ENCODE measurements at regions of chr20 and their contacts with region 1.

Region 1: DNA sequence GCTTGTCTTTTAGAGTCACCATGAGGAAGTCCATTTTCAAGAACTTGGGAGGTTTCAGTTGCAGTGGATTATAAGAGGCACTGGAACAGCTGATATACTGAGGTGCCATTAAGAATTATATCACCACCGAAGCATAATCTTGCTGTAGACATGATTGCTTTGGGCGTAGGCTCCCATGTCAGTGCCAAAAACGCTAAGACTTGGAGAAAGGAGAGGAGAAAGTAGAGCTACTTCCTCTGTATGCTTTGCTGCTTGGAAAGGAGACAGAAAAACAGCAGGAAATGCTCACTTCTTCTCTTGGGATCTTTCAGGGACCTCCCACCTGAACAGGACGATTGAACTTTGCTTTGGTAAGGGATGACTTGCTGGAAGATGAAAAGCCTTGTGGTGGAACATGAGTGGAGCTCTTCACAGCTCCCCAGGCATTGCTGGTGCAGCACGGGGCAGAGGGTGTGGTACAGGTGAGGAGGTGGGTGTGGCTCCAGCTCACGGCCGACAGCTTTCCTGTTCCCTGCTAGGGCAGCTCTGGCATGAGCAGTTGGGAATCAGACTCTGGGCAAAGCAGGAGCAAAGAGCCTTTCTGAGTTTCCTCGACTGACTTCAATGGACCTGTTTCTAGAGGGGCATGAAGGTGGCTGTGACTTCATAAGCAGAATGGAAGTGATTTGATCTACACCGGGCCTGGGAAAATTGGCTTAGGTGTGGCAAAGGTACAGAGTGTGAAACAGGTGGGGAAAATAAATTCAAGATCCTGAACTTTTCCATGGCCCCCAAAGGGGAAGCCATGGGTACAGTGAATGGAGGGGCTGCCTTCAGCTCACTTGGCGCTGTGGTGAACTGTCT is 190.5 kb upstream of the JAG1 start:
- DNase-seq: peak; percentile 92
- ATAC-seq: peak; percentile 70
- H3K4me3 ChIP-seq: peak overlapping the region; percentile 54
- H3K27ac ChIP-seq: peak overlapping the region; percentile 91
- H3K4me1 ChIP-seq: peaks cover 51% of the 10 kb centered on the region
- H3K27me3 ChIP-seq: no peaks in the 10 kb centered on the region
- CTCF ChIP-seq: no peak

Region 2: DNA sequence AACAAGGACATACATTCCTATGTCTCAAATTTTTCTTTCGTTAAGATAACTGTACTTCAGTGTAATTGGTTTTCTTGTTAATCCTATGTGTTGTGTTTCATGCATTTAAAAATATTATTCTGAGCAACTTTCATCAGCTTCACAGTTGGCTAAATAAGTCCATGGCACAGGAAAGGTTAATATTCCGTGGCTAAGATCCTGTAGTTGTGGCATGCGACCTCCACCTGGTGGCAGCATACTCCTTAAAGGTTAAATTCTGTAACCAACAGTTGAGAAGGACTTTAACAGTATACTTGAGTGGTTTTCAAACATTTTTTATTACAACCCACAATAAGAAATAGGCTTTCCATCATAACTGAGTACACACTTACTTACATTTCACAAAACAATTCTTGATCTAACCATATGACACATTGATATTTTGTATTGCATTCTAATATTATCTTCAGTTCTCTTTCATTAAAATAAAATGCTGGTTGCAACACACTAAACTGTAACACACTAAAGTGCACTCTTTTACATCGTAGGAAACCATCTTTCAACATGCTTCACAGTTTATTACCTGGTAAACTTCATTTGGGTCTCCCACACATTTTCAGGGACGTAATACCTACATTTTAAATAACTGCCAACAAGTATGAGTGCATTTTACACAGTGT is 310.8 kb before region 1 on chr20:
- CTCF ChIA-PET with region 1: no interaction called
- POLR2A ChIA-PET with region 1: no interaction called
- intact Hi-C with region 1: loop called (anchors 10 kb)
- DNase-seq: peak; percentile 91
- ATAC-seq: peak; percentile 64
- H3K4me3 ChIP-seq: no peak overlapping the region
- H3K27ac ChIP-seq: peak overlapping the region; percentile 96
- H3K4me1 ChIP-seq: peaks cover 50% of the 10 kb centered on the region
- H3K27me3 ChIP-seq: no peaks in the 10 kb centered on the region
- CTCF ChIP-seq: peak; percentile 96

Region 3: DNA sequence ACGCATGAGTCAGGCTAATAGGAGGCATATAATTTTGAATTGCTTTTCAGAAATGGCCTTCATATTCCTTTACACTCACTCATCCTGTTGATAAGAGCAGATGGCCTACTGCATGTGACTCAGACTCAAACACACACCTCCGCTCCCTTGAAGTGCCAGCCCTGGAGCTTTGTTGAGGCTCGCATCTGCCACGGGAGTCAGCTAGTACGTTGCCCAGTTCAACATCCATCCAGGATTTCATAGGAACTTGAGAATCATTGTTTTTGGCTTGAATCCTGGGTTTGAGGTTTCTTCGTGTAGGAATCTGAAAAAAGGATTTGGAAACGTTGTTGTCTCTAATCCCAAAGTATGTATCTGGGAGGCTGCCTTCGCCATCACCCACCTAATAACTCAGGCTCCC is 103.1 kb before region 1 on chr20:
- CTCF ChIA-PET with region 1: interaction called, 4 read pairs
- POLR2A ChIA-PET with region 1: interaction called, 4 read pairs
- intact Hi-C with region 1: loop called (anchors 2 kb)
- DNase-seq: peak; percentile 93
- ATAC-seq: peak; percentile 65
- H3K4me3 ChIP-seq: 0 out of 2 replicates have a peak overlapping the region, but pooled peaks have one; percentile 9
- H3K27ac ChIP-seq: peak overlapping the region; percentile 94
- H3K4me1 ChIP-seq: peaks cover 42% of the 10 kb centered on the region
- H3K27me3 ChIP-seq: no peaks in the 10 kb centered on the region
- CTCF ChIP-seq: no peak

Region 4: DNA sequence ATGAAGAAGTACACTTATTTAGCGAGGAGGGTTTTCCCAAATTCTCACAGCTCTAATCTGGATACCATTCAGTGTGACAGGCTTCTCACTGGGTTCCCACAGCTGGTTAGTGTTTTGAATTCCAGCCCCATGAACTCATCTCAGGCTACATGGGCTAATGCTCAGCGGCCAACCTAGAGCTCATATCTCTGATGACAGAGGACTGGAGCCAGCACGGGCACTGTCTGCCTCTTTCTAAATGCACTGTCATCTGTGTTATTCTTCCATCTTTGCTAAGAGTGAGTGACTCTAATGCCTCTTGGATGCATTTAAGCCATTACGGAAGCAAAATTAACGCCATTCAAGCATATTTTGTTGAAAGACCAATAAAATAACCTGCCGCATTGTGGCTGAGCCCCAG is 118.4 kb after region 1 on chr20:
- CTCF ChIA-PET with region 1: no interaction called
- POLR2A ChIA-PET with region 1: no interaction called
- intact Hi-C with region 1: loop called (anchors 5 kb)
- DNase-seq: peak; percentile 72
- ATAC-seq: peak; percentile 95
- H3K4me3 ChIP-seq: no peak overlapping the region
- H3K27ac ChIP-seq: no peak overlapping the region
- H3K4me1 ChIP-seq: peaks cover 12% of the 10 kb centered on the region; the same call in 1 of the 2 replicates
- H3K27me3 ChIP-seq: no peaks in the 10 kb centered on the region
- CTCF ChIP-seq: no peak

Region 5: GRCh38 chr20:11153819-11154218 is 289.5 kb after region 1 on chr20:
- CTCF ChIA-PET with region 1: no interaction called
- POLR2A ChIA-PET with region 1: no interaction called
- intact Hi-C with region 1: loop called (anchors 2 kb)
- DNase-seq: peak; percentile 82
- ATAC-seq: peak; percentile 70
- H3K4me3 ChIP-seq: no peak overlapping the region
- H3K27ac ChIP-seq: peak overlapping the region; percentile 63
- H3K4me1 ChIP-seq: peaks cover 49% of the 10 kb centered on the region
- H3K27me3 ChIP-seq: no peaks in the 10 kb centered on the region
- CTCF ChIP-seq: no peak

Region 6: GRCh38 chr20:11274141-11274594 is 409.9 kb after region 1 on chr20:
- CTCF ChIA-PET with region 1: interaction called, 3 read pairs
- POLR2A ChIA-PET with region 1: no interaction called
- intact Hi-C with region 1: loop called (anchors 5 kb)
- DNase-seq: peak; percentile 89
- ATAC-seq: peak; percentile 97
- H3K4me3 ChIP-seq: no peak overlapping the region
- H3K27ac ChIP-seq: no peak overlapping the region
- H3K4me1 ChIP-seq: peaks cover 7% of the 10 kb centered on the region
- H3K27me3 ChIP-seq: no peaks in the 10 kb centered on the region
- CTCF ChIP-seq: peak; percentile 93